A549 (cell line): ENCODE measurements at regions of chr20 and their contacts with region 1.

Region 1: GRCh38 chr20:10090588-10091166 is 55.9 kb downstream of the ANKEF1 start:
- DNase-seq: peak; percentile 57 to 76
- ATAC-seq: peak; percentile 84 to 91
- H3K4me3 ChIP-seq: no peak overlapping the region
- H3K27ac ChIP-seq: peak overlapping the region; percentile 70 to 85
- H3K4me1 ChIP-seq: peaks cover 43% of the 10 kb centered on the region
- CTCF ChIP-seq: peak; percentile 96
- EP300 ChIP-seq: no peak
- POLR2A ChIP-seq: no peak
- RAD21 ChIP-seq: peak; percentile 95 to 96

Region 2: DNA sequence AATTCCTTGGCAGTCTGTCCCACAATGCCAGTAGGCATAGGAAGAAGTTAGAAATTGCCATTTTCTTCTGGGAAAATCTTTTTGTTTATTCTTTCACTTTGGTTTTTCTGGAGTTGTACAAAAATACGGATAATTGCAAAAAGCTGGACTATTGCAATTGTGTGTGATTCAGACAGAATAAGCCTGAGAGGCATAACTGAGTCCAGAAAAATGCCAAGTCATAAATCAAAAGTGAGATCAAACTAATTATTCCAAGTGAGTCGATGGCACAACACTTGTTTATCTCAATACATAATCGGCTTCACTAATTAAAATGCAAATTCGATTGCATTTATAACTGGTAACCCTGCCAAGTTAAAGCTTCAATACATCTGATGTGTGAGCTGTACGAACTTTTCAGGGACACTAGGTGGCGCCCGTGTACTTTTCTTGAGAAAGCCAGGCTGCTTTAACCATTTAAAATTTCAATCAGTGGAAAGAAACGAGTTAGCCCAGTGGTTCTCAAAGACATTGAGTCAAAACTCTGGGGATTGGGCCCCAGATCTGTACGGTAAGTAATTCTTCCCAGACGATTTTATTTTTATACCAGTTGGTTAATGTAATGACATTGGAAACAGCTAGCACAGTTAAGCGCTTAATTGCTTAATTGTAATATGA is 473.7 kb before region 1 on chr20:
- CTCF ChIA-PET with region 1: interaction called, 66 read pairs
- POLR2A ChIA-PET with region 1: no interaction called
- DNase-seq: peak; percentile 65 to 80
- ATAC-seq: peak; percentile 79 to 87
- H3K4me3 ChIP-seq: peak overlapping the region; percentile 39
- H3K27ac ChIP-seq: peak overlapping the region in 1 of 2 experiments; percentile 71; a peak in 4 of 6 replicates
- H3K4me1 ChIP-seq: no peaks in the 10 kb centered on the region
- CTCF ChIP-seq: peak; percentile 98
- EP300 ChIP-seq: no peak
- POLR2A ChIP-seq: no peak
- RAD21 ChIP-seq: peak; percentile 97

Region 3: DNA sequence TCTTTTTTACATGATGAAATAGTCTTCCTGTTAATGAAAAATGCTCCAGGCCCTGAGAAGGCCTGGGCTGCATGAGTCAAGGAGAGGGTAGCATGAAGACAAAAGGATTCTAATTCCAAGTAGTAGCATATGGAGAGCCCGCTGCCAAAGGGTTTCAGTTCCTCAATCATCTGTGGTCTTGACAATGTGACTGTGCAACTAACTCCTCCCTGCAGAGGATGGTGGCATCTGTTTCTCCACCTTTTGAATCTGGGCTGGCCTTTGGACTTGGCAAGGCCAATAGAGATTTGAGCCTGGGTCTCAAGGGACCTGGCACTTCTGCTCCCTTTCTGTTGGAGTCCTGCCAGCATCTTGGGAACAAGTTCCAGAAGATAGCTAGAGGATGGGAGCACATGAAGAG is 91.0 kb before region 1 on chr20:
- CTCF ChIA-PET with region 1: interaction called, 13 read pairs
- POLR2A ChIA-PET with region 1: no interaction called
- DNase-seq: peak in 1 of 2 experiments; percentile 25
- ATAC-seq: no peak
- H3K4me3 ChIP-seq: no peak overlapping the region
- H3K27ac ChIP-seq: peak overlapping the region in 1 of 2 experiments; percentile 47; a peak in 3 of 6 replicates
- H3K4me1 ChIP-seq: peaks cover 8% of the 10 kb centered on the region; the same call in 2 of the 3 replicates
- CTCF ChIP-seq: no peak
- EP300 ChIP-seq: no peak
- POLR2A ChIP-seq: no peak
- RAD21 ChIP-seq: no peak

Region 4: DNA sequence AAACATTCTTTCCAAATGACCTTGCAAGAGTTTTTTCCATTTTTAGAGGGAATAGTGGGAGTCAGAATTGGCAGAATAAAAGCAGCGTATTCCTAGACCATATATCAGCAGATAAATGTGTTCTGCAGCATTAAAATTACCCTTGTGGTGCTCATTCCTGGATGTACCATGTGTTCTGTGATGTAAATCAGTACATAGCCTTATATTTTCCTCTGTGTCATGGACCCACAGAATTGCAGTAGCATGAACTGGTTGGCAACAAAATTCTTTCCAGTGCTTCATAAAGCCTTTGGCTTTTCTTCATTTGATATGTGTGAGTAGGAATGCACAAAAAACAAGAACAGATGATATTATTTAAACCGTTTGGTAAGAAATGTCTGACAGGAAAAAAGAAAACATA is 23.4 kb before region 1 on chr20:
- CTCF ChIA-PET with region 1: interaction called, 18 read pairs
- POLR2A ChIA-PET with region 1: no interaction called
- DNase-seq: no peak
- ATAC-seq: no peak
- H3K4me3 ChIP-seq: no peak overlapping the region
- H3K27ac ChIP-seq: no peak overlapping the region
- H3K4me1 ChIP-seq: no peaks in the 10 kb centered on the region
- CTCF ChIP-seq: no peak
- EP300 ChIP-seq: no peak
- POLR2A ChIP-seq: no peak
- RAD21 ChIP-seq: no peak

Region 5: DNA sequence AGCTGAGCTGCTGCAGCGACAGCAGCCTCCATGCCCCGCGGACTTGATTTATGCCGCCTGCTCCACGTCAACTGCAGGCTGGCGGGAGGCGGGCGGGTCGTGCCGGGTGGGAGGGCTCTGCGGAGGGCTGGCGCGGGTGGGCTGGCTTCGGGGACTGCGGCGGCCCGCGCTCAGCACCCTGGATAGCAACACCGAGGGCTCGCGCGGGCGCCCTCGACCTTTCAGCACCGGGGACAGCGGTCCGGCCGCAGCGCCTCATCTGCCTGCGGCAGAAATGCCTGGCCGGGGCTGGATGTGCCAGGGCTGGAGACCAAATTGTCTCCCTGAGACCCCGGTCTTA is 128.7 kb after region 1 on chr20:
- CTCF ChIA-PET with region 1: interaction called, 37 read pairs
- POLR2A ChIA-PET with region 1: interaction called, 12 read pairs
- DNase-seq: peak; percentile 56 to 74
- ATAC-seq: peak; percentile 62 to 74
- H3K4me3 ChIP-seq: peak overlapping the region; percentile 70
- H3K27ac ChIP-seq: peak overlapping the region; percentile 77 to 93
- H3K4me1 ChIP-seq: peaks cover 63% of the 10 kb centered on the region
- CTCF ChIP-seq: no peak
- EP300 ChIP-seq: no peak
- POLR2A ChIP-seq: peak; percentile 14; the same call in 1 of the 2 replicates
- RAD21 ChIP-seq: peak; percentile 22 to 56; a peak in 4 of 5 replicates

Region 6: GRCh38 chr20:10357974-10358373 is 267.3 kb after region 1 on chr20:
- CTCF ChIA-PET with region 1: interaction called, 13 read pairs
- POLR2A ChIA-PET with region 1: interaction called, 3 read pairs
- DNase-seq: peak in 1 of 2 experiments; percentile 29
- ATAC-seq: no peak
- H3K4me3 ChIP-seq: no peak overlapping the region
- H3K27ac ChIP-seq: peak overlapping the region; percentile 92 to 93
- H3K4me1 ChIP-seq: peaks cover 36% of the 10 kb centered on the region
- CTCF ChIP-seq: peak; percentile 22; the same call in 1 of the 3 replicates
- EP300 ChIP-seq: no peak
- POLR2A ChIP-seq: no peak
- RAD21 ChIP-seq: peak; percentile 30 to 50; a peak in 2 of 5 replicates

Region 7: GRCh38 chr20:10434832-10435812 is 344.4 kb after region 1 on chr20 and contains the start of gene SLX4IP:
- CTCF ChIA-PET with region 1: interaction called, 5 read pairs
- POLR2A ChIA-PET with region 1: interaction called, 12 read pairs
- DNase-seq: peak; percentile 90 to 99
- ATAC-seq: peak; percentile 75 to 83
- H3K4me3 ChIP-seq: peak within 1 kb of the TSS; percentile 75
- H3K27ac ChIP-seq: peak within 1 kb of the TSS; percentile 90 to 96
- H3K4me1 ChIP-seq: peaks cover 48% of the 10 kb centered on the region
- CTCF ChIP-seq: no peak
- EP300 ChIP-seq: no peak
- POLR2A ChIP-seq: peak; percentile 73
- RAD21 ChIP-seq: peak in 1 of 2 experiments; percentile 27; a peak in 1 of 5 replicates
- polyA plus RNA-seq, gene SLX4IP: 7.5 and 8.0 TPM in 2 replicates